ENCODE measurements at regions of chr5 and their contacts with region 1.

Region 1: DNA sequence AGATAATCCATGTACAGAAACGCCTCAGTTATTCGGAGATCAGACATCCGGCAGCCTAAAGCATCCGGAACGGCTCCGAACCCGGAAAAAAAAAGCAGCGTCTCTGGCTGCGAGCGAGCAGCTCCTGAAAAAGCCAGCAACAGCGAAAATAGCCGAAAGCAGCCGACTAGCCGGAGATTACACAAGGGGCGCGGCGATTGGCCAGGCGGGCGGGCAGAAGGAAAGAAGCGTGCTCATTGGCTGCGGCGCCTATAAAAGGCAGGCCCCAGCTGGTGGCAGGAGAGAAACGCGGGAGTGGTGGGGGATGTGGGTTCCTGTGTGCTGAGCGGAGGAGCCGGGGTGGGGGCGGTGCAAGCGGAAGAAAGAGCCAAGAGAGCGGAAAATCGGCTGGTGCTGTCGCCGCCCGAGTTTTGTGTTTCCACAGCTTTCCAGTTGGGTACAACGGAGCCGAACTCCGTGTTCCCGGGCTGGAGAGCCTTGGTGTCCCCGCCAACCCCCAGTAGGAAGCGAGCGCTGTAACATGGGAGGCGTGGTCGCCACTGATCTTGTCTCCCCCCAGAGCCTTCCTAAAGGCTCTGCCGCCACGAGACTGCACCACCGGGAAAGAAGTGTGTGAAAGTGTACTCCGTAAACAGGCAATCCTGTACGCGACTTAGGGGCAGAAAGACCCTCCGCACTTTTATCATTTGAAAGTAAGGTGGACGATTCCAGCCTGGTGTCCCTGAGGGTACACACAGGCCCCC is at the start of gene ARL15:
- DNase-seq: peak; percentile 99 to 100 (median 99)
- ATAC-seq: peak; percentile 96 to 98 (median 98)
- H3K4me3 ChIP-seq: peak within 1 kb of the TSS; percentile 74 to 99 (median 85)
- H3K27ac ChIP-seq: peak within 1 kb of the TSS; percentile 77 to 95 (median 90)
- H3K4me1 ChIP-seq: peaks cover 0 to 29% (median 17%) of the 10 kb centered on the region in 12 donors
- H3K27me3 ChIP-seq: no peaks in the 10 kb centered on the region
- CTCF ChIP-seq: no peak
- POLR2A ChIP-seq: peak; percentile 99 to 100
- total RNA-seq, gene ARL15: 19.3 to 35.0 (median 25.7) TPM

Region 2: DNA sequence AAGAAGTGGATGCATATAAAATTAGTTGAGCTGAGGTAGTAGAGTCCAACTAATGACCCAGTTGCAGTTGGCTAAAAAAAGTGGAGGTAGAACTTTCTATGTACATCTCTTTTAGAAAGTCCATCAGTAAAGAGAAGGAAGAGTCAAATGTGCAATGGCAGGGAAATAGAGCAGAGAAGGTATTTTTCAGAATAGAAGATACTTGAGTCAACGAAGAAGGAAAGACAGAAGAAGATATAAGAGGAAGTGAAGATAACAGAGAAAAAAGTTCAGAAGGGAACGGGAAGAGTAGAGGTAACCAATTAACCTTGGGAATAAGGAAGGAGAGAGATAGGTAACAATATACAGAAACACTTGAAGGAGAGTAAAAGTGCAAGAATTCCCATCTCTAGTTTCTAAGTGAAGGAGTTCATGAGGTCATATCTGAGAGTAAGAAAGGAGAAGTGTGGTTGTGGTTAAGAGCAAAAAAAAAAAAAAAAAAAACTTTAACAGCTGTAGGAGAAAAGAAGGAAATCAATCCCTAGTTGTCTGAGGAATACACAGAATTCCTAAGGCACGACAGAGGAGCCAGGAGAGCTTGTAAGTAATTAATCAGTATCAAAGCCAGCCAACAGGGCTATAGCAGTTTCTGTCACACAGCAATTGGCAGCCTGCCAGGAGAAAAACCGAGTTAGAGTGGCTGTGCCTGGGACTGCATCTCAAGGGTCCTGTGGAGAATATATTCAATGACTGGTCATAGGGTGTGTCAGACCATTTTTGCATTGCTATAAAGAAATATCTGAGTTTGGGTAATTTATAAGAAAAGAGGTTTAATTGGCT is 61.2 kb before region 1 on chr5:
- intact Hi-C with region 1: loop called in 6 of 10 experiments (anchors 1 to 5 kb)
- DNase-seq: peak in 3 of 5 donors; percentile 31 to 56 (median 52)
- ATAC-seq: peak in 1 of 4 donors; percentile 29
- H3K4me3 ChIP-seq: no peak overlapping the region
- H3K27ac ChIP-seq: peak overlapping the region in 1 of 12 donors; percentile 3
- H3K4me1 ChIP-seq: peaks cover 0 to 57% (median 28%) of the 10 kb centered on the region in 12 donors
- H3K27me3 ChIP-seq: no peaks in the 10 kb centered on the region
- CTCF ChIP-seq: no peak
- POLR2A ChIP-seq: no peak

Region 3: DNA sequence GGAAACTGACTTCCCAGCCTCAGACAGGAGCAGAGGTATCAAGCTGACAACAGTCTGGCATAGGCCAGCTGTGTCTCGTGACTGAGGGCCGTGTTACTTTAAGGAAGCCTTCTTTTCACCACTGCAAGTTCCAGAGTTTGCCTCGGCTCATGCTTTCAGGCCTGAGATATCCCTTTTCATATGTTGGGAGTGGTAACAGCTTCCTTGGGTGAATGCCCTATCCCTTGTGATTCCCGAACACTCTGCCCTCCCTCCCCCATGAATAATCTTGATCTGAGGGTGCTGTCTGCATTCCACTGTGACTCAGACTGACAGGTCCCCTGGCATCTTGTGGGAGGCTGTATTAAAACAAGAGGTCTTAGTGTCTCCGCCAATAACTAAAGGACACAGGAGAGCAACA is 49.5 kb after region 1 on chr5:
- intact Hi-C with region 1: loop called in 1 of 10 experiments (anchors 5 kb)
- DNase-seq: no peak
- ATAC-seq: peak in 3 of 4 donors; percentile 33 to 51 (median 41)
- H3K4me3 ChIP-seq: no peak overlapping the region
- H3K27ac ChIP-seq: no peak overlapping the region
- H3K4me1 ChIP-seq: peaks cover 0 to 40% (median 8%) of the 10 kb centered on the region in 12 donors
- H3K27me3 ChIP-seq: no peaks in the 10 kb centered on the region
- CTCF ChIP-seq: no peak
- POLR2A ChIP-seq: no peak

Region 4: GRCh38 chr5:54415896-54416601 is 105.4 kb after region 1 on chr5:
- intact Hi-C with region 1: loop called in 7 of 10 experiments (anchors 2 to 5 kb)
- DNase-seq: no peak
- ATAC-seq: no peak
- H3K4me3 ChIP-seq: no peak overlapping the region
- H3K27ac ChIP-seq: no peak overlapping the region
- H3K4me1 ChIP-seq: peaks cover 0 to 8% (median 0%) of the 10 kb centered on the region in 12 donors
- H3K27me3 ChIP-seq: no peaks in the 10 kb centered on the region
- CTCF ChIP-seq: no peak
- POLR2A ChIP-seq: no peak

Region 5: DNA sequence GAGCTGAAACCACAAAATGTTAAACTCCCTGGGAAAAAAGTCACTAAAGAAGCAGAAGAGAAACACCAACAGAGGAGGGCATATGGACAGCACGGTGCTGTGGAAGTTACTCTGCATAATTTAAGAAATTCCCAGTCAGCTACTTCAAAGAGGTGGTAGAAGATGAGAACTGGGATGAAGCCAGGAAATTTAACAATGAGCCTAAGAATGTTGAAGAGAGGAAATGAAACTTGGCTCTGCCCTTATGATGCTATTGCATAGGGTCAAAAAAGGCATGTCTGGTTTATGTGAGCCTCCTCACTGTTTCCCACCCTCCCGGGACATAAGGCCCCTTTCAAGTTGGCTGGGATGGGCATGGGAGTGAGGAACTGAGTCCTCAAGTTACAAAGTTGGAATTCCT is 181.6 kb after region 1 on chr5:
- intact Hi-C with region 1: loop called in 2 of 10 experiments (anchors 10 kb)
- DNase-seq: no peak
- ATAC-seq: peak in 1 of 4 donors; percentile 27
- H3K4me3 ChIP-seq: no peak overlapping the region
- H3K27ac ChIP-seq: no peak overlapping the region
- H3K4me1 ChIP-seq: peaks cover 0 to 7% (median 0%) of the 10 kb centered on the region in 12 donors
- H3K27me3 ChIP-seq: no peaks in the 10 kb centered on the region
- CTCF ChIP-seq: no peak
- POLR2A ChIP-seq: no peak

Measured in heart left ventricle (tissue), 16 donors.